Body of pancreas (tissue), 4 donors: ENCODE measurements at regions of chr5 and their contacts with region 1.

Region 1: DNA sequence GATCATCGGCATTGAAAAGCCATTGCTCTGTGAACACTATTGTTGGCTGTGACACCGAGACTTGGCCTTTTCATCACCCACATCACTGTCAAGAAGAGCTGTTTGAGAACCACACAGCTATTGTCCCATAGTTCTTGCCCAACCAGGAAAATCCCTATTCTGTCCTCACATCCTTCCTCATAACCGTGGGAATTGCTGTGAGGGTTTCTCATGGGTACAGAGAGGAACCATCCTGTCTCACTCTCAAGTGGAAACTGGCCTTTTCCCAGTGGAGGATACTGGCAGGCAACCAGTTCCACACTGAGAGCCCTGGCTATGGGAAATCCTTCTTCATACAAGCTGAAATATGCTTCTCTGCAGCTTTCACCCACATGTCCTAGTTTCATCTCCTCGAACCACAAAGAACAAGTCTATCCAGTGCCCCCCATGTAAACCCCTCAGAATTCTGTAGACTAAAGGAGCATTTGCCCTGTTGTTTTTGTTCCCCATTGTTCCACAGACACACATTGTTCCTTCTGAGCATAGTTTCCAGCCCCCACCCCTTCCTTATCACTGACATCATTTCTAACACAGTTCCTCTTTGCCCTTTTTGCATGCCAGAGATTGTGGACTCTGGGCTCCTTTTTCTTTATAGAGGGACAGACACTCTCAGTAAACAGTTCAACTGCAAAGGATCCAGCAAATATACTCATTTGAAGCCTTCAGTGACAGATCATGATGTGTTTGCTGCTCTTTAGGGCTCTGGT is 57.8 kb upstream of the C5orf46 start:
- DNase-seq: peak in 1 of 4 donors; percentile 1
- ATAC-seq: peak; percentile 66
- H3K4me3 ChIP-seq: no peak overlapping the region
- H3K27ac ChIP-seq: peak overlapping the region in 2 of 4 donors; percentile 25 to 30
- H3K4me1 ChIP-seq: peaks cover 4% of the 10 kb centered on the region
- H3K27me3 ChIP-seq: no peaks in the 10 kb centered on the region
- CTCF ChIP-seq: no peak
- POLR2A ChIP-seq: no peak

Region 2: DNA sequence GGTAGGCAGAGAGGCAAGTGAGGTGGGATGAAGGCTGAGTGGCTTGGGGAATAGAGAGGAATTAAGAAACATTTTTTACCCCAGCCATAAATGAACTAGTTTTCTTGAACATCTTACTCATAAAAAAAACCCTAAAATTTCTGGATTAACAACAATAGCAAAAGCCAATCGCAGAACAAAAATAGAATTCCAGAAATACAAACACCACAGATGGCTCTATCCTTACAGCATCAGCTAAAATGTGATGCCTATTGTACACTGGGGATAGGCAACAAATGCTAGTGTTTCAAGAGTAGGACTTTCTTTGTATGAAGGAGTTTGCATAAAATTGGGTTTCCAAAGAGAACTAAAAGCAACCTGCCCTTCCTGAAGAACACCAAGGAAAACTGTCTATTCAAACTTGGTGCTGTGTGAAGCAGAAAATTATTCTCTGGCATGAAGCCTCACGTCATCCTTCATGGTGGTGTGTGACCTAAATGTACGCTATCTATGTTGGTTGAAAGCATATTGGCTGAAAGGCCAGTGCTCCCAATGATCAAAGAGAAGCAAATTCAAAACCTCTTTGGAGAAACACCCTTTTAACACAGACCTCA is 264.5 kb before region 1 on chr5:
- intact Hi-C with region 1: no loop called
- DNase-seq: no peak
- ATAC-seq: no peak
- H3K4me3 ChIP-seq: no peak overlapping the region
- H3K27ac ChIP-seq: no peak overlapping the region
- H3K4me1 ChIP-seq: peaks cover 7% of the 10 kb centered on the region
- H3K27me3 ChIP-seq: no peaks in the 10 kb centered on the region
- CTCF ChIP-seq: no peak
- POLR2A ChIP-seq: no peak

Region 3: GRCh38 chr5:148113243-148113642 is 149.1 kb after region 1 on chr5:
- intact Hi-C with region 1: loop called (anchors 10 kb)
- DNase-seq: no peak
- ATAC-seq: no peak
- H3K4me3 ChIP-seq: no peak overlapping the region
- H3K27ac ChIP-seq: no peak overlapping the region
- H3K4me1 ChIP-seq: no peaks in the 10 kb centered on the region
- H3K27me3 ChIP-seq: no peaks in the 10 kb centered on the region
- CTCF ChIP-seq: no peak
- POLR2A ChIP-seq: no peak

Region 4: DNA sequence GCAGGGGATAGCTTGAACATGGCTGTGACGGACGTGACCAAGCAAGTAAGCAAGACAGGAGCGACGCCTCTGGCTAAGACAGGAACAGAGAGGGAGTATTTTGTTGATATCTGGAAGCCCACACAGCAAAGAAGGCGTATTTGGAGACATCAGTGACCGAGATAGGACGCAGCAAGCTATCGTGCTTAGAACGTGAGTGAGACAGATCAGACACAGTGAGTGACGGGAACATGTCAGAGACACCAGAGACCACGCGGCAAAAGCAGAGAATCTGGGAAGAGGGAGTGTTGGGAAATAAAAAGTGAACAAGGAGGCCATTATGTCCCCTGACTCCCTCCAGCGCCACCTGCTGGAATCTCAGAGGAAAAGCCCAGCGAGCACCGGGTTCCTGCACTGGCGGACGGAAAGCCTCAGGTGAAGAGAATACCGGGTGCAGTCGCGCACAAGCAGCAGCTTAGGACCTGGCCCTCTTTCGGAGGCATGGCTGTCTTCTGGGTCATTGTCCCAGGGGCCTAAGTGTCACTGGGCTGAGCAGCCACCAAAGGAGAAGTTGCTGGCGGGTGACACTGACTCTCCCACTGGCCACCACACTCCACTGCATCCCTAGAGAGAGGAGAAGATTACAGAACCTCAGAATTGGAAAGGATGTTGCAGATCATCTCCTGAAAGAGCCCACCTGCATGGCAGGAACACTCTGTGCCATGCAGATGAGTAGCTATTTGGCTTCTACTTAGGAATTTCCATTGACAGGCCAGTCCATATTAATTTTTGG is 518.8 kb after region 1 on chr5:
- intact Hi-C with region 1: no loop called
- DNase-seq: peak; percentile 64 to 75 (median 70)
- ATAC-seq: peak; percentile 75
- H3K4me3 ChIP-seq: no peak overlapping the region
- H3K27ac ChIP-seq: no peak overlapping the region
- H3K4me1 ChIP-seq: no peaks in the 10 kb centered on the region
- H3K27me3 ChIP-seq: no peaks in the 10 kb centered on the region
- CTCF ChIP-seq: peak; percentile 64 to 89 (median 77)
- POLR2A ChIP-seq: no peak